B cell (primary cell): ENCODE measurements at regions of chr12 and their contacts with region 1.

Region 1: DNA sequence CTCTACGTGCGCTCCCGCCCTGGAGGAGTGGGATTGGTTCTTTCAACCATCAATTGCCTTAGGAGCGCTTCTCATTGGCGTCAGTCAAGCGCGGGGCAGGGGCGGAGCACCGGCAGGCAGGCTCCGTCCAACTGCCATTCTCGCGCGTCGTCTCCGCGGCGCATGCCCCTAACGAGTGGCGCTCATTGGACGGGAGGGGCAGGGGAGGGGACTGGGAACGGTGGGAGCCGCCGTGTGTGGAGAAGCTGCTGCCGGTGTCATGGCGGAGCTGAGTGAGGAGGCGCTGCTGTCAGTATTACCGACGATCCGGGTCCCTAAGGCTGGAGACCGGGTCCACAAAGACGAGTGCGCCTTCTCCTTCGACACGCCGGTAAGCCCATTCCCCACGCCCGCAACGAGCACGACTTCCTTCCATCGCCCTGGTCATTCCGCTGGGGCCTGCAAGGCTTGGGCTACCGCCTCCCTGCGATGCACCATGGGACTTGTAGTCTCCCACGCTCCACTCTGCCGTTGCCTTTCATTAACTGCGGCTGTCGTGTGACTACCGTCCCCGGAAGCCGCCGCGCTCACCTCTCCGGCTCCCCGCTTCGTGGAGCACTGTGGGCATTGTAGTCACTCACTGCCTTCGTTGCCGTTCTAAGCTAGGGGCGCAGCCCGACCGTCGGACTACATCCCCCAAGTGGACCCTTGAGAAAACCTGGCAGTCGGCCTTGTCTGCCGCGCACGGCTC is at the start of gene USP5:
- DNase-seq: peak; percentile 100
- ATAC-seq: peak; percentile 76
- H3K4me3 ChIP-seq: peak within 1 kb of the TSS; percentile 85 to 98 (median 92)
- H3K4me3 Mint-ChIP-seq: peak within 1 kb of the TSS; percentile 92
- H3K27ac ChIP-seq: peak within 1 kb of the TSS; percentile 91
- H3K27ac Mint-ChIP-seq: peak within 1 kb of the TSS; percentile 93
- H3K4me1 ChIP-seq: peaks cover 6 to 23% of the 10 kb centered on the region in 2 donors
- H3K4me1 Mint-ChIP-seq: peaks cover 23% of the 10 kb centered on the region
- H3K27me3 ChIP-seq: no peaks in the 10 kb centered on the region
- H3K27me3 Mint-ChIP-seq: no peaks in the 10 kb centered on the region
- CTCF ChIP-seq: no peak
- total RNA-seq, gene USP5: 56.8 and 59.7 TPM in 2 replicates

Region 2: DNA sequence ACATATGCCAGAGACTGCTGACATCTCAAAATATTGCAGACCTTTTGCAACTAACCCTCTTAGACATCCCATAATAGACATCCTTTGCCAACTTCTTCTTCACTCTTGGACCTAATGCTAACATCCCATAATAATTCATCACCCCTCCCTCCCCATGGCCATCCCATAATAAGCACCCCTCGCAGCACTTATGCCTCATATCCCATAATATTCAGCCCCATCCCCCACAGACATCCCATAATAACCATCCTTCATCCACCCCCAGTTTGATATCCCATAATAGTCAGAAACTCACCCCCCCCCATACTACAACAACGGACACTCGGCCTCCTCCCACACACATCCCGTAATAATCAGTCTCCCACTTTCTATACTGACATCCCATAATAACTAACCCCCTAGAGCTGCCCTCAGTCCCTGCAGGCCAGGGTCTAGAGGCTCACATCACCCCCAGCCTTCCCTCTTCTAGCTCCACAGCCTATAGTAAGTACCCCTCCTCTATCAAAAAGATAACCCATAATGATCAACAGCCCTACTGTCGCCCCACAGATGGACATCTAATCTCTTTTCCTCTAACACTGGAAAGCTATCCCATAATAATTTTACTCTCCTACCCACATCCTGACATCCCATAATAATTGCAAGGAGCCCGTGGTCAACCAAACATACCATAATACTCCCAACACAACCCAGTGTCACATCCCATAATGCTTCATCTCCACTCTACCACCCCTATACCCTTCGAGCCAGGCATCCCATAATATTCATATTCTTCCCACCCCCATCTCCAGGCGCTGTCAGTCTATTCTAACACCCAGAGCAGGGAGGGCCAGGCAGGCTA is 244.1 kb before region 1 on chr12:
- CTCF ChIA-PET with region 1: interaction called, 3 read pairs
- POLR2A ChIA-PET with region 1: no interaction called
- intact Hi-C with region 1: loop called (anchors 1 kb)
- DNase-seq: peak; percentile 90
- ATAC-seq: peak; percentile 20
- H3K4me3 ChIP-seq: no peak overlapping the region
- H3K4me3 Mint-ChIP-seq: no peak overlapping the region
- H3K27ac ChIP-seq: peak overlapping the region; percentile 90 to 95
- H3K27ac Mint-ChIP-seq: no peak overlapping the region
- H3K4me1 ChIP-seq: peaks cover 56 to 63% of the 10 kb centered on the region in 2 donors
- H3K4me1 Mint-ChIP-seq: peaks cover 58% of the 10 kb centered on the region
- H3K27me3 ChIP-seq: no peaks in the 10 kb centered on the region
- H3K27me3 Mint-ChIP-seq: no peaks in the 10 kb centered on the region
- CTCF ChIP-seq: no peak

Region 3: DNA sequence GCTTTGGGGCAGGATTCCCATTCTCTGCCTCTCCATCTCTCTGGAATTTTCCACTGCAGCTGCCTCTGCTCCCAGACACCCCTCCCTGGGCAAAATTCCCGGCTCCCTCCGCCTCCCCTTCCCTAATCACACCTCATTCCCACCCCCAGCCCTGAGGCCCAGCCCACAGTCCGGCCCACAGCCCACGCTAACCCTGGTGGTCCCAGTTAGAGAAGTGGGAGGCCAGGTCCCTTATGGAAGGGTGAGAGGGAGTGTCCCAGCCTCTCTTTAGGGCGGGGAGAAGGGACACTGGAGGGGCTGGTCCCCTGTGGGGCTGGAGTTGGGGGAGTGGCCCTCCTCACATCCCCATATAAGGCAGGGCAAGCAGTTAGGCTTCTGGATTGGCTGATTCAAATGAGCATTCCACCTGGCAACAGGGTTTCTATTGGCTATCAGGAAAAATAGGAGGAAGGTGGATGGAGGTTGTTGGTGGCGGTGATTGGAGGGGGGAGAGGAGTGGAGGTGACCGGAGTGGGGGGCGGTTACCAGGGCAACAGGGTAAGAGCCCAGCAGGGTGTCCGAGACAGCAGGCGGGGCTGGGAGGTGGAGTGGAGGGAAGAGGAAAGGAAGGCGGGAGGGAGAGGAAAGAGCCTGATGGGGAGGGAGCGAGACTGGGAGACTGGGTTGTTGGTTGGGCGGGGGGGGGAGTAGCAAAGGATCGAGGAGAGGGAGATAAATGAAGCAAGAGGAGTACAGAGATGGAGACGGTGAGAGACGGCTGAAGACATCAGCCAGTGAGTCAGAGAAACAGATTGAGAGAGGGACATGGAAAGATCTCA is 87.9 kb before region 1 on chr12:
- CTCF ChIA-PET with region 1: interaction called, 5 read pairs
- POLR2A ChIA-PET with region 1: no interaction called
- intact Hi-C with region 1: loop called (anchors 5 kb)
- DNase-seq: peak; percentile 80
- ATAC-seq: peak; percentile 72
- H3K4me3 ChIP-seq: peak overlapping the region in 1 of 5 experiments; percentile 14
- H3K4me3 Mint-ChIP-seq: peak overlapping the region; percentile 61
- H3K27ac ChIP-seq: no peak overlapping the region
- H3K27ac Mint-ChIP-seq: peak overlapping the region; percentile 28
- H3K4me1 ChIP-seq: peaks cover 33 to 36% of the 10 kb centered on the region in 2 donors
- H3K4me1 Mint-ChIP-seq: peaks cover 29% of the 10 kb centered on the region
- H3K27me3 ChIP-seq: peaks cover 0 to 44% (median 27%) of the 10 kb centered on the region in 4 experiments
- H3K27me3 Mint-ChIP-seq: peaks cover 43% of the 10 kb centered on the region
- CTCF ChIP-seq: no peak

Region 4: GRCh38 chr12:6867413-6868210 is 15.5 kb after region 1 on chr12 and contains the start of gene TPI1:
- CTCF ChIA-PET with region 1: interaction called, 136 read pairs
- POLR2A ChIA-PET with region 1: interaction called, 49 read pairs
- intact Hi-C with region 1: loop called (anchors 1 kb)
- DNase-seq: peak; percentile 83
- ATAC-seq: peak; percentile 83
- H3K4me3 ChIP-seq: peak within 1 kb of the TSS; percentile 56 to 88 (median 68)
- H3K4me3 Mint-ChIP-seq: peak within 1 kb of the TSS; percentile 96
- H3K27ac ChIP-seq: peak within 1 kb of the TSS; percentile 70 to 77
- H3K27ac Mint-ChIP-seq: peak within 1 kb of the TSS; percentile 97
- H3K4me1 ChIP-seq: peaks cover 33 to 41% of the 10 kb centered on the region in 2 donors
- H3K4me1 Mint-ChIP-seq: peaks cover 50% of the 10 kb centered on the region
- H3K27me3 ChIP-seq: no peaks in the 10 kb centered on the region
- H3K27me3 Mint-ChIP-seq: no peaks in the 10 kb centered on the region
- CTCF ChIP-seq: no peak
- total RNA-seq, gene TPI1: 178 and 181 TPM in 2 replicates

Region 5: GRCh38 chr12:6904280-6905278 is 52.5 kb after region 1 on chr12 and contains the start of gene LRRC23:
- CTCF ChIA-PET with region 1: no interaction called
- POLR2A ChIA-PET with region 1: interaction called, 8 read pairs
- intact Hi-C with region 1: loop called (anchors 1 kb)
- DNase-seq: peak; percentile 98
- ATAC-seq: peak; percentile 98
- H3K4me3 ChIP-seq: peak within 1 kb of the TSS; percentile 59 to 86 (median 74)
- H3K4me3 Mint-ChIP-seq: no peak within 1 kb of the TSS
- H3K27ac ChIP-seq: peak within 1 kb of the TSS; percentile 82 to 94
- H3K27ac Mint-ChIP-seq: no peak within 1 kb of the TSS
- H3K4me1 ChIP-seq: peaks cover 14 to 24% of the 10 kb centered on the region in 2 donors
- H3K4me1 Mint-ChIP-seq: peaks cover 6% of the 10 kb centered on the region
- H3K27me3 ChIP-seq: no peaks in the 10 kb centered on the region
- H3K27me3 Mint-ChIP-seq: no peaks in the 10 kb centered on the region
- CTCF ChIP-seq: no peak
- total RNA-seq, gene LRRC23: 14.4 and 15.5 TPM in 2 replicates

Region 6: DNA sequence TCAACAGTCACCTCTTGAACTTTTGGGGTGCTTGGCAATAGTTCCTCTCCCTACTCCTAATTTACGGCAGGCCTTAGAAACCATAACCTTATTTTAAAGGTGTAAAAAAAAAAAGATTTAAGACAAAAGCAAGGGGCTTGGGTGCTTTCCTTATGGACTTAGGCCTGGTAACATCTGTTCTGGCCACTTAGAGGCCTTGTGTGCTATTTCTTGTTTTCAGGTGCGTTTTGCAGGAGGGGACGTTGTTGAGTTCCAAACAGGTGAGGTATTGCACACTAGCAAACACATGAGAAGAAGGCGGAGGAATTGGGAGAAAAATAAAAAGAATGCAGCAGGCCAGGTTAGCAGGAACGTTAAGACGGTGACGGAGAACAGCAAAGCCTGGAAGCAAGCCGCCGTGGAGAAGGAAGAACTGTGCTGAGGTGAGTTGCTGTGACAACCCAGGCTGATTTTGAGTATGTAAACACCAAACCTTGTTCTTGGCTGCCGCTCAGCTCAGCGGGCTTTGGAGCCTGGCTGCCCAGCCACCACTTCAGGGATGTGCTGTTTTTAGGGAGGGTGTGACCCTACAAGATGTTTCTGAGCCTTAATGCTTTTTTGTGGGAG is 136.0 kb after region 1 on chr12:
- CTCF ChIA-PET with region 1: no interaction called
- POLR2A ChIA-PET with region 1: no interaction called
- intact Hi-C with region 1: no loop called
- DNase-seq: no peak
- ATAC-seq: no peak
- H3K4me3 ChIP-seq: no peak overlapping the region
- H3K4me3 Mint-ChIP-seq: no peak overlapping the region
- H3K27ac ChIP-seq: no peak overlapping the region
- H3K27ac Mint-ChIP-seq: no peak overlapping the region
- H3K4me1 ChIP-seq: no peaks in the 10 kb centered on the region
- H3K4me1 Mint-ChIP-seq: no peaks in the 10 kb centered on the region
- H3K27me3 ChIP-seq: no peaks in the 10 kb centered on the region
- H3K27me3 Mint-ChIP-seq: no peaks in the 10 kb centered on the region
- CTCF ChIP-seq: no peak